ENCODE measurements at regions of chr14 and their contacts with region 1.

Region 1: DNA sequence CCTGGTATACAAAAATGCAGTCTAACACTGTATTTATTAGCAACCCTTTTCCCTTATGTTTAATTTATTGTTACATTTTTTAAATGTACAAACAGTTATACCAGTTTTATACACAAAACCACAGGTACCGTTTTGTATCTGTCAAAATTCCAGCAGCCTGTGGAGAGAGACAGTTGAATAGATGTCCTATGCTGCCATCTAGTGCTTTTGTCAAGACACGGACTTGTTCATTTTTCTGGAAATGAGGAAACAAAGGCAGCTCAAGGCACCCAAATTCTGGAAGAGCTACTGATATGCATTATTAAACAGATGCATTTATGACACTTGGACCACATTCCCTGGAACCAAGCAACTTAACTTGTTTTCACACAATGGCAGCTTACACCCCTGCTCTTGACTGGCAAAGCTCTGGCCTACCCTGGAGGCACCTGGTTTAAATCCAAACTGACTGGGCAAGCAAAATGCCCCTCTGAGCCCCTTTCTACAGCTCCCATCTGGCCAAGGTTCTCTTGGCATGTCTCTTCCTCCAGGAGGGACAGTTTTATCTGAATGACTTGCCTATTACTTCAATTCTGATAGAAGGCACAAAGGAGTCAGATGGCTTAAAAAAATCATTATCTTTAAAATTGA is 286.9 kb upstream of the PRKD1 start:
- DNase-seq: no peak
- ATAC-seq: peak in 3 of 4 donors; percentile 42 to 77 (median 63)
- H3K4me3 ChIP-seq: no peak overlapping the region
- H3K27ac ChIP-seq: no peak overlapping the region
- H3K4me1 ChIP-seq: no peaks in the 10 kb centered on the region
- H3K27me3 ChIP-seq: no peaks in the 10 kb centered on the region
- CTCF ChIP-seq: peak; percentile 52

Region 2: DNA sequence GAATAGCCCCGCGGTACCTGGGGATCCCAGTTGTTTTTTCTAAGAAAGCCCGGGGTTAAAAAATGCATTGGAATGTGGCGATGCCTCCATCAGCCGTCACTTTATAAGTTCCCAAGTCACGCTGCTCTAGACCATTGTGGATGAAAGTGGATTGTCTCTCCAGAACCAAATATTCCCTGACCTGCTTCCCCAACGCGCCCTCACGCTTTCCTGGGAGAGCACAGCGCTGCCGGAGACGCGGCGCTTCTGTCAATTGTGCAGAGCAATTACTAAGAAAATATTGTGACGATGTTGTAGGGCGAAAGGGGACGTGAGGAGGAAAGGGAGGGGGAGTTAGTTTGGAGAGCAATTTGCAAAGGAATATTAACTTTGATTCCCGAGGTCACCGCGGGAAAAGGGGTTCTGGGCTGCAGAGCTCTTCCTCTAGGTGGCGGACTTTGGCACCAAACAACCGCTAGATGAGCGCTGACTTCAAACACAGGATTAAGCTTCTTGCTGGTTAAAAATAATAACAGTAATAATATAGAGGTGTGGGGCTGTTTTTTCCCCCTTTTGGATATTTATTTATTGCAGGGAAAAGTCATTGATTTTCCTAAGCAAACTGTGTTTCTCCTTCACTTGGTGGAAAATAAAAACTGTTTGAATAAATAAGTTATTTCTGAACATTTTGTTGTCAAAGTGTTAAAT is 1457.5 kb before region 1 on chr14:
- intact Hi-C with region 1: loop called in 1 of 2 experiments (anchors 5 kb)
- DNase-seq: no peak
- ATAC-seq: no peak
- H3K4me3 ChIP-seq: no peak overlapping the region
- H3K27ac ChIP-seq: no peak overlapping the region
- H3K4me1 ChIP-seq: no peaks in the 10 kb centered on the region
- H3K27me3 ChIP-seq: peaks cover 13 to 82% (median 31%) of the 10 kb centered on the region in 3 donors
- CTCF ChIP-seq: peak; percentile 18